GM10248 (cell line): ENCODE measurements at regions of chr6 and their contacts with region 1.

Region 1: DNA sequence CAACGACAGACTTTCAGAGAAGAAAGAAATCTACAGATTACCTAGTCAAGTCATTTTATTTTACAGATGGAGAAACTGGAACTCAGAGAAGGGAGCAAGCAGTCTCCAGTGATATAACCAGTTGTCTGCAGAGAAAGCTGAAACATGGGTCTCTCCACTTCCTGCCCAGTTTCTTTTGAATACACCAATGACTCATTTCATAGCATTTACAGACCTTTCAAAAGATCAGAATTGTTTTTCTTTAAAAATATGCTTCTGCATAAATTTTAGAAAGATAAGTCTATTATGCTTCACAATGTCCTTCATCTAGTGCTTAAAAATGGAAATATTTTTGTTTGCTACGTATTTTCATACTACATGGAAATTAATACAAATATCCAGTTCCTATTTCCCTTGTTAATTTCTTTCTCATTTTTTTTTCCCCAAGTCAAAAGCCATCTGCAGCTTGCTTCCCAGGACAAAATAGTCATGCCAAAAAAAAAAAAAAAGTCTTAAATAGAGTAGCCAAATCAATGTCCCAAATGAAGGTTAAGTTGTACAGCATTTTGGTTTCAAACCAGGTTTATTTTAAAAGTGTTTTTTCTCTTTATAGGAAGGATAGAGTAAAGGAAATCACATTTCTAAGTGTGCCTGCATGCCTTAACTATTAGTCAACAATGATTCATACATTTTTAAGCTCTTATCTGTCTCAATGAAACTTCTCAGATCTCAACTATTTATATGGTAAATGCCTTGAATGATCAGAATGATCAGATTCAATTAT is 36.9 kb downstream of the ARHGAP18 start:
- DNase-seq: peak; percentile 42
- CTCF ChIP-seq: no peak

Region 2: GRCh38 chr6:129641344-129641743 is 31.7 kb before region 1 on chr6:
- CTCF ChIA-PET with region 1: interaction called, 15 read pairs
- POLR2A ChIA-PET with region 1: no interaction called
- DNase-seq: no peak
- CTCF ChIP-seq: no peak

Region 3: DNA sequence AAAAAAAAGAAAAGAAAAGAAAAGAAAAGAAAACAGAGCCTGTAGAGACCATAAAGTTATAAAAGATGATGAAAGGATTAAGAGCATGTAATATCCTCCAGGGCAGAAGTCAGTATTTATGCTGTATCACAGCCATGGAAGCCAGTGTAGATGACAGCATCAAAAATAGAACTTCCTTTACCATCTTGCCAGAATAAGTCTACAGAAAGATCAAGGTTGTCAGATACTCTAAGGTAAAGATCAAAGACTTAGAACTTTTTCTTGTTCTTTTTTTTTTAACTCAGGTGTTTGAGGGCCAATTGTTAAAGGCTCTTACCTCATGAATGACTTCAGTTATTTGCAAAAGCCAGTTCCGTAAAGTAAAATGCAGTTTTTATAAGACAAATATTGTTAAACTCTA is 17.7 kb before region 1 on chr6:
- CTCF ChIA-PET with region 1: interaction called, 28 read pairs
- POLR2A ChIA-PET with region 1: no interaction called
- DNase-seq: no peak
- CTCF ChIP-seq: no peak

Region 4: GRCh38 chr6:129683601-129684322 is 10.7 kb after region 1 on chr6:
- CTCF ChIA-PET with region 1: interaction called, 46 read pairs
- POLR2A ChIA-PET with region 1: no interaction called
- DNase-seq: peak; percentile 86
- CTCF ChIP-seq: no peak

Region 5: DNA sequence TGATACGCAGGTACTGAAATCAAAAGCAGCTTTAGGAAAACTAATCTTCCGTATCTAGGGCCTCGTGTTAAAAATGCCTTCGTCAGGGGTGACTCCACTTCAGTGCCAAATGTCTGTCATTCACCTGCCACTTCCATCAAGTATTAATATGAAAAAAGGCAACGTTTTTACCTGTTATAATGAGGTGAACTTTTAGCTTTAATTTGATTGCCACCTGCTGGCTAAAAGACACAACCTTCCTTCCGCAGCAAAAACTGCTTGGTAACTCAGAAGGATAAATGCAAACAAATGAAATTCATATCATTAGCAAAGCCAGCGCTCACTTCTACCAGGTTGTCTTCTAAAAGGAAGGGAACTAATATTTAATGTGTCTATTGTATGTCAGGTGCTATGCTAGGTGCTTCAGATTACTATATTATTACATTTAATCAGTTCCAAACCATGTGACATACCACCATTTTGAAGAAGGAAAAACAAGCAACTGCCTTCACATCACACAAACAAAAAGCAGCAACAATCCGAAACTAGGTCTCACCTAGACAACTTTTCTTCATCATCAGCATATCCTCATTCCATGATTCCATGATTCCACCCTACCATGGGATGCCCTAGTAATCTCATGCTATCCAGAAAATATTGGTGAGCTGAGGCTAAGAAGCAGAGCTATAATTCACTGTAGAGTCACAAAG is 57.6 kb after region 1 on chr6:
- CTCF ChIA-PET with region 1: interaction called, 10 read pairs
- POLR2A ChIA-PET with region 1: interaction called, 4 read pairs
- DNase-seq: peak; percentile 45
- CTCF ChIP-seq: peak; percentile 76